ENCODE measurements at regions of chr14 and their contacts with region 1.

Region 1: GRCh38 chr14:69153131-69153872 is 383 bp upstream of the DCAF5 start:
- DNase-seq: peak; percentile 95
- H3K4me3 Mint-ChIP-seq: peak overlapping the region; percentile 92
- H3K27ac Mint-ChIP-seq: peak overlapping the region; percentile 69
- H3K4me1 Mint-ChIP-seq: peaks cover 32% of the 10 kb centered on the region
- H3K27me3 Mint-ChIP-seq: peaks cover 20% of the 10 kb centered on the region

Region 2: GRCh38 chr14:69129264-69129880 is 23.9 kb before region 1 on chr14:
- CTCF ChIA-PET with region 1: interaction called, 28 read pairs
- POLR2A ChIA-PET with region 1: interaction called, 14 read pairs
- DNase-seq: peak; percentile 73
- H3K4me3 Mint-ChIP-seq: no peak overlapping the region
- H3K27ac Mint-ChIP-seq: no peak overlapping the region
- H3K4me1 Mint-ChIP-seq: peaks cover 28% of the 10 kb centered on the region
- H3K27me3 Mint-ChIP-seq: no peaks in the 10 kb centered on the region

Region 3: DNA sequence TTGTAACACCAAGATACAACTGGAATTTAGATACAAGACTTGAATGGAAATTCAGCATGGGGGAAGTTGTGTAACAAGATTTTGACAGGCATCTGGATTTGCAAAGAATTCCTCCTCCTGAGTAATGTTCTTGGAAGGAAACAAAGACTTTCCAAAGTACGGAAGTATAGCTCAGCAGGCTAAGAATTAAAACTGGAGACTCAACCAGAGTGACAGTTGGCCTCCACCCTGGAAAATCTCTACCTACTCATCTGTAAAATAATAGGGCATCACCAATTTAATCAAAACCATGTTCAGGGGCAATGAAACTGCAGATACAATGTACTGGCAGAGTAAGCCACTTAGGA is 15.1 kb before region 1 on chr14:
- CTCF ChIA-PET with region 1: interaction called, 14 read pairs
- POLR2A ChIA-PET with region 1: interaction called, 10 read pairs
- DNase-seq: no peak
- H3K4me3 Mint-ChIP-seq: no peak overlapping the region
- H3K27ac Mint-ChIP-seq: no peak overlapping the region
- H3K4me1 Mint-ChIP-seq: peaks cover 10% of the 10 kb centered on the region
- H3K27me3 Mint-ChIP-seq: no peaks in the 10 kb centered on the region